Caco-2 (cell line): ENCODE measurements at regions of chr3 and their contacts with region 1.

Region 1: DNA sequence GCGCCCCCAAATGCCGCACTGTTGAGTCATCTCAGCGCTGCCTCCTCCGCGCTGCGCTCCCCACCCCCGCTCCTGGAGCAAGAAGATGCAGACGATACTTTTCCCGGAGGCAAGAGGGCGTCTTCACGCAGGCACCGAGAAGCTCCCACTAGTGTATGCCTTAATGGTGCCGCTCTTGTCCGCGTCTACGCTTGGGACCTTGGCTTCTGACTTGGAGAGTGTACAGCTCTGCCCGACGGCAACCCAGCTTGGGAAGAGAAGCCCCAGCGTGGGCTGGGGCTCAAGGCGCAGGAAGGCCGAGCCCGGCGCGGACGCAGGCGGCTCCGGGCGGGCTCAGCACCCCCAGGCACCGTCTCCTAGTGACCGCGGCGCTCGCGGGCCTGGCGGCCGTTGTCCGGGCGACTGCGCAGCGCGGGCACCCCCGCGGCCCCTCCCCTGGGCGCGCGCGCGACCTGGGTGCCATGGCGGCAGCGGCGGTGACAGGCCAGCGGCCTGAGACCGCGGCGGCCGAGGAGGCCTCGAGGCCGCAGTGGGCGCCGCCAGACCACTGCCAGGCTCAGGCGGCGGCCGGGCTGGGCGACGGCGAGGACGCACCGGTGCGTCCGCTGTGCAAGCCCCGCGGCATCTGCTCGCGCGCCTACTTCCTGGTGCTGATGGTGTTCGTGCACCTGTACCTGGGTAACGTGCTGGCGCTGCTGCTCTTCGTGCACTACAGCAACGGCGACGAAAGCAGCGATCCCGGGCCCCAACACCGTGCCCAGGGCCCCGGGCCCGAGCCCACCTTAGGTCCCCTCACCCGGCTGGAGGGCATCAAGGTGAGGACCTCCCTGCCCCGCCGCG is at the start of gene P4HTM:
- DNase-seq: peak; percentile 82 to 84
- H3K4me3 ChIP-seq: peak within 1 kb of the TSS; percentile 95
- H3K4me3 Mint-ChIP-seq: peak within 1 kb of the TSS; percentile 96
- H3K27ac Mint-ChIP-seq: peak within 1 kb of the TSS; percentile 98
- H3K4me1 ChIP-seq: peaks cover 13% of the 10 kb centered on the region
- H3K4me1 Mint-ChIP-seq: peaks cover 13% of the 10 kb centered on the region
- H3K27me3 ChIP-seq: no peaks in the 10 kb centered on the region
- H3K27me3 Mint-ChIP-seq: no peaks in the 10 kb centered on the region
- CTCF ChIP-seq: peak in 1 of 2 experiments; percentile 40
- total RNA-seq, gene P4HTM: 24.4 and 25.5 TPM in 2 replicates

Region 2: DNA sequence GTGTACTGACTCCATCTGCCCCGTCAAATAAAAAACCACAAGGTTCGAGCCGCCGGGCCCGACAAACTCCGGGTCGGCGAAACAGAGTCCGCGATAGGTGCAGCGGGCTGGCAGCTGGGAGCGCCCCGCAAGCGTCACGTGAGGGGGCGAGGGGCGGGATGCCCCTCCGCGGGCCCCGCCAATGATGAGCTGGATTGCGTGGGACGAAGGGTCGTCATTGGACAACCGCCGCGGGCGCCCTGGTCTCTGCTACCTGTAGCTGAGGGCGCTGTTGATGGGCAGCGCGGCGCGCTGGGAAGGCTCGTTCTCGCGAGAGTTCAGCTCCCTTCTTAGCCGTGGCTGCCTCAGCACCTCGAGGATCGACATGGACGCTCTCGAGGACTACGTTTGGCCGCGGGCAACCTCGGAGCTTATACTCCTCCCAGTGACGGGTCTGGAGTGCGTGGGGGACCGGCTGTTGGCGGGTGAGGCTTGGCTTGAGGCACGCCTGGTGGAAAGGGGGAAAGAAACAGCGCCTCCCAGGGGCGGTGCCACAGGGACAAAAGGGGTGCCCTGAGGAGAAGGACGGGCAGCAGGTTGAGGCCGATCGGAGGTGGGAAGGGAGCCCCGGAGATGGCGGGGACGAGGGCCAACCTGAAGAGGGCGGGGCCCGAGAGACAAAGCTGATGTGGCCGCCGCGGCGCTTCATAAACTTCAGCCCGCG is 17.2 kb after region 1 on chr3 and contains the start of gene WDR6:
- CTCF ChIA-PET with region 1: interaction called, 54 read pairs
- POLR2A ChIA-PET with region 1: interaction called, 24 read pairs
- intact Hi-C with region 1: loop called (anchors 2 kb)
- DNase-seq: peak; percentile 98
- H3K4me3 ChIP-seq: peak within 1 kb of the TSS; percentile 92
- H3K4me3 Mint-ChIP-seq: peak within 1 kb of the TSS; percentile 94
- H3K27ac Mint-ChIP-seq: peak within 1 kb of the TSS; percentile 98
- H3K4me1 ChIP-seq: peaks cover 26% of the 10 kb centered on the region
- H3K4me1 Mint-ChIP-seq: peaks cover 13% of the 10 kb centered on the region
- H3K27me3 ChIP-seq: no peaks in the 10 kb centered on the region
- H3K27me3 Mint-ChIP-seq: no peaks in the 10 kb centered on the region
- CTCF ChIP-seq: peak in 1 of 2 experiments; percentile 8
- total RNA-seq, gene WDR6: 184 and 185 TPM in 2 replicates

Region 3: DNA sequence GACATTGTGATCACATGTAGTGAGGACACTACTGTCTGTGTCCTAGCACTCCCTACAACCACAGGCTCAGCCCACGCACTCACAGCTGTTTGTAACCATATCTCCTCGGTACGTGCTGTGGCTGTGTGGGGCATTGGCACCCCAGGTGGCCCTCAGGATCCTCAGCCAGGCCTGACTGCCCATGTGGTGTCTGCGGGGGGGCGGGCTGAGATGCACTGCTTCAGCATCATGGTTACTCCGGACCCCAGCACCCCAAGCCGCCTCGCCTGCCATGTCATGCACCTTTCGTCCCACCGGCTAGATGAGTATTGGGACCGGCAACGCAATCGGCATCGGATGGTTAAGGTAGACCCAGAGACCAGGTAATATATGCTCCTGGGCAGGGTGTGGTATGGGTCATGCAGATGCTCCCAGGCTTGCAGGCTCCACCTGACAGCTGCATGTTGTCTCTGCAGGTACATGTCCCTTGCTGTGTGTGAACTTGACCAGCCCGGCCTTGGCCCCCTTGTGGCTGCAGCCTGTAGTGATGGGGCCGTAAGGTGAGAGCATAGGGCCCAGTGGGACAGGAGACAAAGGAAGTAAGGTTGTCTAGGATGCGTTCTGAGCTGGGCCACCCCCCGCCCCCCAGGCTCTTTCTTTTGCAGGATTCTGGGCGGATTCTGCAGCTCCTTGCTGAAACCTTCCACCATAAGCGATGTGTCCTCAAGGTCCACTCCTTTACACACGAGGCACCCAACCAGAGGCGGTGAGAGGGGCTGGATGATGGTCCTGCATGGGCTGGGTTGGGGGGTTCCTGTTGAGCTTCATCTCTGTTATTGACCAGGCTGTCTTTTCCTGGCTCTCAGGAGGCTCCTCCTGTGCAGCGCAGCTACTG is 24.0 kb after region 1 on chr3:
- CTCF ChIA-PET with region 1: interaction called, 29 read pairs
- POLR2A ChIA-PET with region 1: interaction called, 3 read pairs
- intact Hi-C with region 1: loop called (anchors 1 kb)
- DNase-seq: peak; percentile 79 to 88
- H3K4me3 ChIP-seq: no peak overlapping the region
- H3K4me3 Mint-ChIP-seq: no peak overlapping the region
- H3K27ac Mint-ChIP-seq: no peak overlapping the region
- H3K4me1 ChIP-seq: no peaks in the 10 kb centered on the region
- H3K4me1 Mint-ChIP-seq: peaks cover 5% of the 10 kb centered on the region
- H3K27me3 ChIP-seq: no peaks in the 10 kb centered on the region
- H3K27me3 Mint-ChIP-seq: no peaks in the 10 kb centered on the region
- CTCF ChIP-seq: peak; percentile 60 to 86

Region 4: GRCh38 chr3:49021813-49022687 is 32.0 kb after region 1 on chr3 and contains the start of gene NDUFAF3:
- CTCF ChIA-PET with region 1: interaction called, 12 read pairs
- POLR2A ChIA-PET with region 1: interaction called, 3 read pairs
- intact Hi-C with region 1: no loop called
- DNase-seq: peak; percentile 95 to 98
- H3K4me3 ChIP-seq: peak within 1 kb of the TSS; percentile 85
- H3K4me3 Mint-ChIP-seq: peak within 1 kb of the TSS; percentile 88
- H3K27ac Mint-ChIP-seq: peak within 1 kb of the TSS; percentile 97
- H3K4me1 ChIP-seq: peaks cover 3% of the 10 kb centered on the region; the same call in 1 of the 2 replicates
- H3K4me1 Mint-ChIP-seq: peaks cover 6% of the 10 kb centered on the region
- H3K27me3 ChIP-seq: no peaks in the 10 kb centered on the region
- H3K27me3 Mint-ChIP-seq: no peaks in the 10 kb centered on the region
- CTCF ChIP-seq: peak; percentile 82 to 92
- total RNA-seq, gene NDUFAF3: 65.9 and 68.7 TPM in 2 replicates

Region 5: GRCh38 chr3:49158108-49158709 is 168.2 kb after region 1 on chr3:
- CTCF ChIA-PET with region 1: interaction called, 5 read pairs
- POLR2A ChIA-PET with region 1: no interaction called
- intact Hi-C with region 1: loop called (anchors 1 kb)
- DNase-seq: peak; percentile 78 to 79
- H3K4me3 ChIP-seq: no peak overlapping the region
- H3K4me3 Mint-ChIP-seq: no peak overlapping the region
- H3K27ac Mint-ChIP-seq: peak overlapping the region; percentile 4
- H3K4me1 ChIP-seq: no peaks in the 10 kb centered on the region
- H3K4me1 Mint-ChIP-seq: no peaks in the 10 kb centered on the region
- H3K27me3 ChIP-seq: no peaks in the 10 kb centered on the region
- H3K27me3 Mint-ChIP-seq: no peaks in the 10 kb centered on the region
- CTCF ChIP-seq: peak; percentile 58 to 86

Region 6: DNA sequence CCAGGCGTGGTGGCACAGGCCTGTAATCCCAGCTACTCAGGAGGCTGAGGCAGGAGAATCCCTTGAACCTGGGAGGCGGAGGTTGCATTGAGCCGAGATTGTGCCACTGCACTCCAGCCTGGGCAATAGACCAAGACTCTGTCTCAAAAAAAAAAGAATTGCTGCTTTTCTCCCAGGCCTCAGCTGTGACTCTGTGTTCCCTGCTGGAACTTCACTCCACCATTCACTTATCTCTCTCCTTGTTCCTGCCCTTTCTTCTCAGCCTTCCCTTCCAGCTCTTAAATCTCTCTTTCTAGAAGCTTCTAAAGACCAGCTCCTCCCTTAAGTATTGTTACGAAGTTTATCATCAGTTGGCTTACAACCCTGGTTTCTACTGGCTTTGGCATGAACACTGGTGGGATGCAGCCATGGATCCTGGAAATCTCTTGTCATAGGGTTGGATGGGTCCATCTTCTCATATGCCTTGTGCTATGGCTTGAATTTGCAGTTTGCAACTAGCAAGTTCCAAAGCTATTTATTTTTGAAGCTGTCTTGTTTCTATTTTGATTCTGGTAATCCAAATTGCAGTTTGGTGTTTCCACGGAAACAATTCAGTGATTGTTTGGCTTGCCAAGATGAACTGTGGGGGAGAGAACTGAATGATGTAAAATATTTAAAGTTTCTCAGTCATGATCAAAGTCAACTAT is 276.5 kb after region 1 on chr3:
- CTCF ChIA-PET with region 1: no interaction called
- POLR2A ChIA-PET with region 1: no interaction called
- intact Hi-C with region 1: no loop called
- DNase-seq: no peak
- H3K4me3 ChIP-seq: no peak overlapping the region
- H3K4me3 Mint-ChIP-seq: no peak overlapping the region
- H3K27ac Mint-ChIP-seq: no peak overlapping the region
- H3K4me1 ChIP-seq: peaks cover 7% of the 10 kb centered on the region
- H3K4me1 Mint-ChIP-seq: peaks cover 14% of the 10 kb centered on the region
- H3K27me3 ChIP-seq: no peaks in the 10 kb centered on the region
- H3K27me3 Mint-ChIP-seq: no peaks in the 10 kb centered on the region
- CTCF ChIP-seq: no peak